ENCODE measurements at regions of chr15 and their contacts with region 1.

Region 1: GRCh38 chr15:78149068-78149804 is at the start of gene IDH3A:
- DNase-seq: peak; percentile 91 to 99
- H3K4me3 ChIP-seq: peak within 1 kb of the TSS; percentile 79 to 90
- H3K27ac ChIP-seq: peak within 1 kb of the TSS; percentile 81 to 87
- H3K4me1 ChIP-seq: peaks cover 5 to 14% of the 10 kb centered on the region in 2 donors
- H3K27me3 ChIP-seq: no peaks in the 10 kb centered on the region
- CTCF ChIP-seq: no peak
- total RNA-seq, gene IDH3A: 17.7 TPM

Region 2: DNA sequence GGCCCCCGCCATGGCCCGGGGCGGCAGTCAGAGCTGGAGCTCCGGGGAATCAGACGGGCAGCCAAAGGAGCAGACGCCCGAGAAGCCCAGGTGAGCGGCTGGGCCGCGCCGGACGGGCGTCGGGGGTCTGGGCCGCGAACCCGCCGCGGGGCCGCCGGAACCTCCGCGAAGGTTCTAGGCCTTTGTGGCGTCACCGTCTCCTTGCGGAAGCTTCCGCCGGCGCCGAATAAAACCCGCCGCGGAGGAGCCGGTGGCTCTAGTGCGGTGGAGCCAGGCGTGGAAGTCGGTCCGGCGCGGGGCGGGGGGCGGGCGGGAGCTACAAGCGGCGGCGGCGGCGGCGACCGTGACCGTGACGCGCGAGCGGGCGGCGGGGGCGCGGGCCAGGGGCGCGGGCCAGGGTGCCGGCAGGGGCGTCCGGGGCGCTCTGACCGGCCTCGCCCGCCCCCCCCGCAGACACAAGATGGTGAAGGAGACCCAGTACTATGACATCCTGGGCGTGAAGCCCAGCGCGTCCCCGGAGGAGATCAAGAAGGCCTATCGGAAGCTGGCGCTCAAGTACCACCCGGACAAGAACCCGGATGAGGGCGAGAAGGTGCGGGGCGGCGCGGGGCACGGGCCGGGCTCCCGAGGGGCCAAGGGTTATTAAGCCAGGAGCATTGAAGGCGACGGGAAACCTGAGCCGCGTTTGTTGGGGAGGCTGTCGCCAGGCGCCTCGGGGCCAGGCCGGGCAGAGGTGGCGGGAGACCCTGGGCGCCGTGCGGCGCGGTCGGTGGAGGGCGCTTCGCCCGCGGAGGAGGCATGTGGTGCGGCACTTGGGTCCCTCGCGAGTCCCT is 115.3 kb after region 1 on chr15 and contains the start of gene DNAJA4:
- intact Hi-C with region 1: loop called (anchors 2 kb)
- DNase-seq: peak in 1 of 2 donors; percentile 78
- H3K4me3 ChIP-seq: peak within 1 kb of the TSS; percentile 61 to 92
- H3K27ac ChIP-seq: peak within 1 kb of the TSS; percentile 44 to 75
- H3K4me1 ChIP-seq: peaks cover 8 to 10% of the 10 kb centered on the region in 2 donors
- H3K27me3 ChIP-seq: no peaks in the 10 kb centered on the region
- CTCF ChIP-seq: peak in 1 of 3 experiments; percentile 28
- total RNA-seq, gene DNAJA4: 3.5 TPM

Region 3: DNA sequence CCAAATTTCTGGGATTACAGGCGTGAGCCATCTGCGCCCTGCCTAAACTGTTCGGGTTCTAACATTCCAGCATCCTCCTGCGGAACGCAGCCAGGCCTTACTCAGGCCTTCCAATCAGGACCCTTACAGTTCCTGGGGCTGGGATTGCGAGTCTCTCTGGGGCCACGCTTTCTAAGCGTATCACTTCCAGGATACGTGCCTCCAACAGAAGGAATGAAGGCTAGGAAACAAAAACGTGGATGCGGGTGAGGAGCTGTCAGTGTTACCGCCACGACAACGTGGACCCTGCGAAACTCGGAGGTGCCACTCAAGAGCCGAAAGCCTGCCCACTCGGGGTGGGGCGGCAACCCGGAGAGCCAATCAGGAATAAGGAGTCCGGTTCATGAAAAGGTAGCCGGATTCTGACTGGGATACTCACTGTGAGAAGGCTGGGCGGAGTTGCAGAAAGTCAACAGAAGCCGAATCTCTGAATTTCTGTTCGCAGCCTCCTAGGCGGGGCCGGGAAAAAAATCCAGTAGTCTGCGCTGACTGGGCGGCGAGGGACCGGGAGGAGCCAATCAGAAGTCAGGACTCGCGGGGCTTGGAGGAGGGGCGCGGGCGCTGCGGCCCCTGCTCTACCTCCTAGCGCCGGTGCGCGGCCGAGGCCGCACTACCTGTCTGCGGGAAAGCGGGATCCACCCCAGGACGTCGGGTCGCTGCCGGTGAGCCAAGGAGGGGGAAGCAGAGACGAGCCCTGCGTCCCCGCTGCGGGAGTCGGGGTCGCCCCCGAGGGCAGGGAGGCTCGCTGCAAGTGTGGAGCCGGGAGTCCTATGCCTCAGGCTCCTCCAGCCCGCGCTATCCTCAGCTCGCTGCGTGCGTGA is 358.0 kb after region 1 on chr15 and contains the start of gene HYKK:
- intact Hi-C with region 1: loop called (anchors 5 kb)
- DNase-seq: peak; percentile 73 to 97
- H3K4me3 ChIP-seq: peak within 1 kb of the TSS; percentile 61 to 76
- H3K27ac ChIP-seq: peak within 1 kb of the TSS; percentile 44 to 59
- H3K4me1 ChIP-seq: peaks cover 0 to 4% of the 10 kb centered on the region in 2 donors
- H3K27me3 ChIP-seq: no peaks in the 10 kb centered on the region
- CTCF ChIP-seq: peak in 1 of 3 experiments; percentile 28
- total RNA-seq, gene HYKK: 9.0 TPM

Measured in ascending aorta (tissue), 2 donors.